ENCODE measurements at regions of chr11 and their contacts with region 1.

Region 1: DNA sequence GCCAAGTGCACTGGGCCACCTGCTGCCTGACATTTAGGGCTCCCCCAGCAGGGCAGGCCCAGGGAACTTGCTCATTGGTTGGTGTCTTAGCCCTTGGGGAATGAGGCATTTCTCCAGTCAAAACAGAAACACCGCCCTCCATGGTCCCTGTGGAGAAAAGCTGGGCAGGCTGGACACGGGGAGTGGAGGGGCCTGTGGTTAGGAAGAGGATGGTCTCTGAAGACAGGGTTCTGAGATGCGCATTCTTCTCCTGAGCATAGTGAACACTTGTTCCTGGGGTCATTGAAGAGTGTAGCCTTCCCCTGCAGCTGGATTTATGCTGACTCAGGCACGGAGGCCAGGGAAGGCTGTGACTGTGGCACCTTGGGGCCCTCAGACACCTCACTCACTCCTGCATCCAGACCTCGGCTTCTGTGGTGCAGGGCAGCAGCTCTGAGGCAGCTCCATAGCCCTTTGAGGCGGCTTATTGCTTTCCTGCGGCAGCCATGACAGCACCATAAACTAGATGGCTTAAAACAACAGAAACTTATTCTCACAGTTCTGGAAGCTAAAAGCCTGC is 8.2 kb downstream of the TSPAN18 start:
- DNase-seq: no peak
- ATAC-seq: no peak
- H3K4me3 ChIP-seq: no peak overlapping the region
- H3K4me3 Mint-ChIP-seq: no peak overlapping the region
- H3K27ac ChIP-seq: no peak overlapping the region
- H3K27ac Mint-ChIP-seq: peak overlapping the region in 1 of 2 donors; percentile 52
- H3K4me1 ChIP-seq: peaks cover 0 to 12% of the 10 kb centered on the region in 2 experiments
- H3K4me1 Mint-ChIP-seq: peaks cover 49 to 72% (median 51%) of the 10 kb centered on the region in 3 donors
- H3K27me3 ChIP-seq: peaks cover under 1 to 2% of the 10 kb centered on the region in 2 experiments
- H3K27me3 Mint-ChIP-seq: no peaks in the 10 kb centered on the region

Region 2: GRCh38 chr11:44651535-44652155 is 83.3 kb before region 1 on chr11:
- CTCF ChIA-PET with region 1: no interaction called
- POLR2A ChIA-PET with region 1: no interaction called
- DNase-seq: no peak
- ATAC-seq: no peak
- H3K4me3 ChIP-seq: no peak overlapping the region
- H3K4me3 Mint-ChIP-seq: no peak overlapping the region
- H3K27ac ChIP-seq: no peak overlapping the region
- H3K27ac Mint-ChIP-seq: no peak overlapping the region
- H3K4me1 ChIP-seq: no peaks in the 10 kb centered on the region
- H3K4me1 Mint-ChIP-seq: peaks cover 0 to 9% (median 8%) of the 10 kb centered on the region in 3 donors
- H3K27me3 ChIP-seq: peaks cover 0 to 47% of the 10 kb centered on the region in 2 experiments
- H3K27me3 Mint-ChIP-seq: peaks cover 21 to 26% of the 10 kb centered on the region in 2 donors

Region 3: DNA sequence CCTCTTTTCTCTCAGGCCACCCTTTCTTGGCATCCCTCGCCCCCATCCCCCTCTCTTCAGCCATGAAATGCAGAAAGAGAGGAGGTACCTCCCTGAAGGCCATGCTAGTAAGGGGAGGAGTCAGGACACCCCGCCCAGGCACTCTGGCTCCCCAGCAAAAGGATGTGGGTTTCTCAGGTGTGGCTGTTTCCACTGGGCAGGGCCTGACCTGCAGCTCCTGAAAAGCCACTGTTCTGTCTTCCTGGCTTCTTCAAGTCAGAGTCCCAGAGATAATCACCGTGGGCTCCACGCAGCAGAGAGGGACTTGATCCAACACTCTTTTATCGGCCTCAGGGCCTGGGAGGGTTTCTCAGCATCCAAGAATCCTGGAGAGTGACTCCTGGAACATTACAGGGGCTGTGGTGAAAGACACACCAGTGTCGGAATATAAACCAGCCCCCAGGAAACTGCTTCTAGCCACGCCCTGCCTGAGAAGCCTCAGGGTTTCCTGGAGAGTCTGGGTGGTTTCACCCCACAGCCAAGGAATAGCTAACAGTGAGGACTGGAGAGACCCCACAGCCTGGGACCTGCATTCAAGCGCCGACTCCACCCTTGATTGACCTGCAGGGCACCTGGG is 53.8 kb before region 1 on chr11:
- CTCF ChIA-PET with region 1: no interaction called
- POLR2A ChIA-PET with region 1: no interaction called
- DNase-seq: peak in 33 of 35 experiments; percentile 13 to 76 (median 37)
- ATAC-seq: peak; percentile 90 to 98 (median 96)
- H3K4me3 ChIP-seq: peak overlapping the region; percentile 39 to 41
- H3K4me3 Mint-ChIP-seq: peak overlapping the region; percentile 70 to 81 (median 72)
- H3K27ac ChIP-seq: peak overlapping the region; percentile 22
- H3K27ac Mint-ChIP-seq: peak overlapping the region; percentile 60 to 77
- H3K4me1 ChIP-seq: peaks cover 10 to 34% of the 10 kb centered on the region in 2 experiments
- H3K4me1 Mint-ChIP-seq: peaks cover 46 to 67% (median 54%) of the 10 kb centered on the region in 3 donors
- H3K27me3 ChIP-seq: no peaks in the 10 kb centered on the region
- H3K27me3 Mint-ChIP-seq: no peaks in the 10 kb centered on the region

Region 4: GRCh38 chr11:44750551-44751465 is 15.9 kb after region 1 on chr11:
- CTCF ChIA-PET with region 1: interaction called in 1 of 2 experiments, 10 read pairs
- POLR2A ChIA-PET with region 1: interaction called in 1 of 2 experiments, 4 read pairs
- DNase-seq: no peak
- ATAC-seq: no peak
- H3K4me3 ChIP-seq: no peak overlapping the region
- H3K4me3 Mint-ChIP-seq: no peak overlapping the region
- H3K27ac ChIP-seq: no peak overlapping the region
- H3K27ac Mint-ChIP-seq: no peak overlapping the region
- H3K4me1 ChIP-seq: peaks cover 0 to 30% of the 10 kb centered on the region in 2 experiments
- H3K4me1 Mint-ChIP-seq: peaks cover 38 to 59% (median 48%) of the 10 kb centered on the region in 3 donors
- H3K27me3 ChIP-seq: peaks cover 0 to 3% of the 10 kb centered on the region in 2 experiments
- H3K27me3 Mint-ChIP-seq: no peaks in the 10 kb centered on the region

Region 5: GRCh38 chr11:44763111-44763820 is 28.3 kb after region 1 on chr11:
- CTCF ChIA-PET with region 1: no interaction called
- POLR2A ChIA-PET with region 1: no interaction called
- DNase-seq: no peak
- ATAC-seq: no peak
- H3K4me3 ChIP-seq: no peak overlapping the region
- H3K4me3 Mint-ChIP-seq: no peak overlapping the region
- H3K27ac ChIP-seq: no peak overlapping the region
- H3K27ac Mint-ChIP-seq: no peak overlapping the region
- H3K4me1 ChIP-seq: peaks cover 0 to 3% of the 10 kb centered on the region in 2 experiments
- H3K4me1 Mint-ChIP-seq: peaks cover 12 to 21% (median 12%) of the 10 kb centered on the region in 3 donors
- H3K27me3 ChIP-seq: peaks cover 0 to 3% of the 10 kb centered on the region in 2 experiments
- H3K27me3 Mint-ChIP-seq: no peaks in the 10 kb centered on the region

Measured in T-cell (primary cell).